Panc1 (cell line): ENCODE measurements at regions of chr15 and their contacts with region 1.

Region 1: GRCh38 chr15:65275728-65276126 is 11.0 kb downstream of the PARP16 start:
- DNase-seq: no peak
- ATAC-seq: no peak
- H3K4me3 ChIP-seq: no peak overlapping the region
- H3K27ac ChIP-seq: no peak overlapping the region
- H3K4me1 ChIP-seq: no peaks in the 10 kb centered on the region
- H3K27me3 ChIP-seq: no peaks in the 10 kb centered on the region
- CTCF ChIP-seq: no peak

Region 2: DNA sequence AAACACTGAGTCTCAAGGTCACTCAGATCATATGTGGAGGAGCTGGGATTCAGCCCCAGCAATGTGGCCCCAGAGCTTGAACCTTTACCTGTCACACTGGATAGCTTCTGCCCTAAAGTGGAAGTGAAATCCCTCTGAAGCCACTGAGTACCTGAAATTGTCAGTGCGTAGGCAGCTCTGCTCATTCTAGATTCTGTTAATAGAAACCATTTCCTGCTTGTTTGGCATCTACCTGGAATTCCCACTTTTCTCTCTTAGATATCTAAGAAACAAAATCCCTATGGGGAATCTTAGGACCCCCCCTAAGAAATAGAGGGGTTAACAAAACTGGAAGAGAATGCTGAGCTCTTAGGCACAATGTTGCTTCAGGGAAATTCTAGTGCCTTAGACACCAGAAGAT is 1648.8 kb before region 1 on chr15:
- CTCF ChIA-PET with region 1: no interaction called
- POLR2A ChIA-PET with region 1: no interaction called
- in situ Hi-C with region 1: no loop called
- intact Hi-C with region 1: no loop called
- DNase-seq: no peak
- ATAC-seq: no peak
- H3K4me3 ChIP-seq: no peak overlapping the region
- H3K27ac ChIP-seq: no peak overlapping the region
- H3K4me1 ChIP-seq: no peaks in the 10 kb centered on the region
- H3K27me3 ChIP-seq: no peaks in the 10 kb centered on the region
- CTCF ChIP-seq: no peak

Region 3: GRCh38 chr15:65184868-65185738 is 90.6 kb before region 1 on chr15 and contains the start of gene CLPX:
- CTCF ChIA-PET with region 1: interaction called, 3 read pairs
- POLR2A ChIA-PET with region 1: no interaction called
- in situ Hi-C with region 1: no loop called
- intact Hi-C with region 1: loop called (anchors 1 kb)
- DNase-seq: peak; percentile 89
- ATAC-seq: peak; percentile 95
- H3K4me3 ChIP-seq: peak within 1 kb of the TSS; percentile 83 to 85
- H3K27ac ChIP-seq: peak within 1 kb of the TSS; percentile 90
- H3K4me1 ChIP-seq: peaks cover 6% of the 10 kb centered on the region; the same call in 1 of the 2 replicates
- H3K27me3 ChIP-seq: no peaks in the 10 kb centered on the region
- CTCF ChIP-seq: no peak
- total RNA-seq, gene CLPX: 49.9 TPM

Region 4: DNA sequence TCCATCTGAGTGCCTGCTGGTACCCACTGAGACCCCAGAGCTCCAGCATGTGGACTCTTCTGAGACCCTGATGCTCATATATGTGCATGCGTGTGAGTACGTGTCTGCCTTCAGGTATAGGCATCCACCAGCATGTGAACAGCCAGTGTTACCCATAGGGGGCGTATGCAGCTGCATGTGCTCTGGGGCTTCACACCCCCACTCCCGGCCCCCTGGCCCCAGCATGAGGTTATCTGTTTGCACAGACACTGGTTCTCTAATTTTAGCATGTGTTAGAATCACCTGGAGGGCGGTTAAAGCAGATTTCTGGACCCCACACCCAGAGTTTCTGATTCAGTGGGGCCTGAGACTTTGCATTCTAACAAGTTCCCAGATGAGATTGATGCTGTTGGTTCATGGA is 63.6 kb before region 1 on chr15:
- CTCF ChIA-PET with region 1: interaction called, 11 read pairs
- POLR2A ChIA-PET with region 1: no interaction called
- in situ Hi-C with region 1: no loop called
- intact Hi-C with region 1: no loop called
- DNase-seq: no peak
- ATAC-seq: peak; percentile 59
- H3K4me3 ChIP-seq: no peak overlapping the region
- H3K27ac ChIP-seq: no peak overlapping the region
- H3K4me1 ChIP-seq: no peaks in the 10 kb centered on the region
- H3K27me3 ChIP-seq: no peaks in the 10 kb centered on the region
- CTCF ChIP-seq: peak; percentile 72; the same call in 1 of the 2 replicates

Region 5: GRCh38 chr15:65258375-65259262 is 17.1 kb before region 1 on chr15:
- CTCF ChIA-PET with region 1: no interaction called
- POLR2A ChIA-PET with region 1: no interaction called
- in situ Hi-C with region 1: no loop called
- intact Hi-C with region 1: no loop called
- DNase-seq: no peak
- ATAC-seq: no peak
- H3K4me3 ChIP-seq: no peak overlapping the region
- H3K27ac ChIP-seq: no peak overlapping the region
- H3K4me1 ChIP-seq: no peaks in the 10 kb centered on the region
- H3K27me3 ChIP-seq: no peaks in the 10 kb centered on the region
- CTCF ChIP-seq: no peak